SK-MEL-5 (cell line): ENCODE measurements at regions of chr11 and their contacts with region 1.

Region 1: DNA sequence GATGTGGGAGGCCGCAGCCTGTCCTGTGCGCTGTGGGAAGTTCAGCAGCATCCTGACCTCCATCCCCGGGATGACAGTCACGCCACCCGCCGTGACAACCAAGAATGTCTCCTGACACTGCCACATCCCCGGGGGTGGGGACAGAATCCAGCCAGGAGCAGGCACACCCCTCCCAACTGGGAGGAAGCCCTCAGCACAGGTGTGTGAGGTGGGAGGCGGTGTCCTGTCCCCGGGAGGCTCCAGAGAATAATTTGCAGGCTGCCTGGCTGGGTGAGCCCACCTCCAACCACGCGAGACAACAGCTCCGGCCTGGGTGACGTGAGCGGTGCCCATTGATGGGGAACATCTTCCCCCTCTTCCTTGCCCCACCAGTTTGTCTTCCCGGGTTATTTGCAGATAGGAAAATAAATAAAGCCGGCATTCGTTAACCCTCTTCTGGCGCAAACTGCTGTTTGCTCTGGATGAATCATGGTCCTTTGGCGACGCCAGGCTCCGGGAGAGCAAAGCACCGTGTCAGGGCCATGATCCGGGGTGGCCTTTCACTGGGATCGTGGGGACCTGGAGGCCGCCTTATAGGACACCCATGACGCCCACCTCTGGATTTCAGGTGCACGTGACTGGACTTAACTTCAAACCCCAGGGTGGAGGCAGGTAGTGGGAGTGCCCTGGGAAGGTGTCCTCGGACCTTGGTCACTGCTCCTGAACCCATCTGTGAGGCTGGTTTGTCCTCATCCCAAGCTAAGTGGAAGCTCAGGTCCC is 13.8 kb downstream of the CCND1 start:
- DNase-seq: no peak

Region 2: GRCh38 chr11:69115586-69116560 is 538.9 kb before region 1 on chr11:
- in situ Hi-C with region 1: loop called (anchors 10 kb)
- DNase-seq: no peak

Region 3: GRCh38 chr11:69311767-69312385 is 342.9 kb before region 1 on chr11:
- in situ Hi-C with region 1: loop called (anchors 10 kb)
- DNase-seq: no peak

Region 4: GRCh38 chr11:69603111-69603836 is 51.5 kb before region 1 on chr11:
- in situ Hi-C with region 1: no loop called
- DNase-seq: no peak

Region 5: DNA sequence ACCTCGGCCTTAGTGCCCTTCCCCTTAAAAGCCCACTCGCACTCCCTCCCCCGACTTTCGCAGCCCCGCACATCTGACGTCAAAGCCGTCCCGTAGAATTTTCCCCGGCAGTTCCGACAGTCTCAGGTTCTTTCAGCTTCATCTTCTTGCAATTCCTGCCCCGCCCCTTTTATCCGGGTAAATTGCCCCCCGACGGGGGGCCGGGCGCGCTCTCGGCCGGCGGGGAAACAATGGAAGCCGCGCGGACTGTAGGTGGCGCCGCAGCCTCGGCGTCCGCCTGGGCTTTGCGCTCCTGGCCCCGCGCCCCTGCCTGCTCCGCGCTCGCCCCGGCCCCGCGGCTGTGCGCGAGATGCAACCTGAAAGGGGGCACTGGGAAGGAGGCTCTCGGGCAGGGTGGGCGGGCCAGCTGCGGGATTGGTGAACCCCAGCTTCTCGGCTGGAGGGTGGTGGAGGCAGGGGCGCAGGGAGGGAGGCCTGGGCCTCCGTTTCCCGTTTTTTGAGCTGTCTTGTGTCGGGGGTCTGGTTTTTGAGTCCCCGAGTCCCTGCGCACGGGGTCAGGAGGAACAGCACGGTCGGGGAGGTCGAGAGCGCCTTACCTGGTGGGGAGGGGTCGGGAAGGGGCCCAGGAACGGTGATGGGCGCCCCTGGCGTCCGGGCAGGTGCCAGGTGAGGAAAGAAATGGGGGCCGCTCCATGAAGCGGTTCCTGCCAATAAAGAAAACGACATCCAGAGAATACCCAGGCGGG is 49.9 kb after region 1 on chr11:
- in situ Hi-C with region 1: no loop called
- DNase-seq: peak; percentile 72